Activated CD8-positive, alpha-beta T cell treated with anti-CD3 and anti-CD28 coated beads, Interleukin-2, amount 10 ng/mL, durations not matched to agents 7 days and 5 days (primary cell): ENCODE measurements at regions of chr1 and their contacts with region 1.

Region 1: DNA sequence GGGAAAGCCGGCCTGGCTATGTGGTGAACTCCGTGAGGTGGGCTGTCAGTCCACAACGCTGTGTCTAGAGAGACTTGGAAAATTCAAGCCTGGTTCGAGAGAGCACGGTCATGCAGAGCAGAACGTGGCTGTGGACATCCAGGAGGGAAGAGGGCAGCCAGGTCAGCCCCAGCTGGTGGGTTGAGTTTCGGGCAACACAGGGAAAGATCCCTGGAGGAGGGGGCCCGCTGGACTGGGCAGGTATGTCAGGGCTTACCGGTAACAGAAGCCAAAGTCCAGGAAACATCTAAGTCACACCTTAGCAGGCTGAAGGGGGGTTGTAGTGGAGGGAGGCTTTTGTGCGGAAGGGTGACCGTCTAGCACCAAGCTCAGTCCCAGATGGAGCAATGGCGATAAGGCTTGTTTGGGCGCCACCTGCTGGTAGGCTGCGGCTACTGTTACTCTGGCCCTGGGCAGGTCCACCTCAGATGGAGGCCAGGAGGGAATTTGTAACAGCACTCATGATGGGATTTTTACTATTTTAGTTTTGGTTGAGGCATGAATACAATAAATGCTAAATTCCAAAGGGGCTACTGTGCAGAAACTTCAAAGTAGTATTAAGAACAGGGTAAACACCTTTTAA is 143.3 kb upstream of the ZNF644 start:
- DNase-seq: peak; percentile 73
- ATAC-seq: peak; percentile 89
- H3K4me3 Mint-ChIP-seq: no peak overlapping the region
- H3K27ac Mint-ChIP-seq: no peak overlapping the region
- H3K4me1 Mint-ChIP-seq: no peaks in the 10 kb centered on the region
- H3K27me3 Mint-ChIP-seq: no peaks in the 10 kb centered on the region

Region 2: DNA sequence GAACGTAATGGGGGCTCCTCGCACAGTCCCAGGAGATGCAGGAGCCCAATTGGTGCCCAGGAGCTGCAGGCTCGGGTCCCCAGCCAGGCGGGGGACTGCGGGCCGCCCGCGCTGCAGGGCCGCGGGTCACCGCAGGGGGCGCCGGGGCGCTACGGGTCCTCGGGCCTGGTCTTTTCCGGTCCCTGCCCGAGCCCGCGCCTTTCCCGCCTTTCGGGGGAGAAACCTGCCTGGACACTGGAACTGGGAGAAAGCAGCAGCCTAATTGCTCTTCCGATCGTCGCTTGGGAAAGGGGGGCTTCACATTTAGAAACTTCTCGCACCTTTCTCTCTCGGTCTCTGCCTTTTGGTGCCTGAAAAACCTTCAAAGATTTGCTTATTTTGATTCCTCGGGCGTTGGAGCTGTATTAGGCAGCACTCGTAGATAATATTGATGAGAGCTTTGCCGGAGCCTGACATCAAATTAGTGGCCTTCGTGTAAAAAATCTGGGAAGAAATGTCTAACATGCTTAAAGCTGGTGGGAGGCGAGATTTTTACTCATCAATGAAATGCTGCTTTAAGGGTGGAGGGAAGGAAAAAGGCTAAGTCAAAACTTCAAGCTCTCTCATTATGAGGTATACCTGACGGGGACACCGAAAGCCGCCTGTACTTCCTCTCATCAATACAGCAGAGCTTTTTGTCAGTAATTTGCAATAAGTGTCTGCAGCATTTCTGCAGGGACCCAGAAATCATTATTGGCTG is 435.5 kb before region 1 on chr1:
- CTCF ChIA-PET with region 1: interaction called, 12 read pairs
- POLR2A ChIA-PET with region 1: no interaction called
- DNase-seq: no peak
- ATAC-seq: no peak
- H3K4me3 Mint-ChIP-seq: no peak overlapping the region
- H3K27ac Mint-ChIP-seq: no peak overlapping the region
- H3K4me1 Mint-ChIP-seq: peaks cover 38% of the 10 kb centered on the region
- H3K27me3 Mint-ChIP-seq: peaks cover 79% of the 10 kb centered on the region

Region 3: DNA sequence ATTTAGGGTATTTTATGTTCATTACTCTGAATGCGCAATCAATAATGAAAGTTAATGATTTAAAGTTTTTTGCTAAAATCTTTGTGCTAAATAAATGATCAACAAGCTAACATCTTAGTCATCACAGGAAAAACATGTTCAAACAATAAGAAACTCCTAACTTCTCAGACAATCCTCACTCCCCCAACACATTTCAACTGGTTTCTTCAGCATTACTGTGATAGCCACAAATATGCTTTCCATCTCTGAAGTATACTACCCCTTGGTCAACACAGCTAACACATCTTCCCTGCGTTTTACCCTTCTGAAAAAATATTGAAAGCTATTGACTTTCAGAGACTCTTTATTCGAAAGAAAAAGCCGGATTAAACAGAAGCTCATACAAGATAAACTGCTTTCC is 229.1 kb before region 1 on chr1:
- CTCF ChIA-PET with region 1: no interaction called
- POLR2A ChIA-PET with region 1: no interaction called
- DNase-seq: no peak
- ATAC-seq: no peak
- H3K4me3 Mint-ChIP-seq: no peak overlapping the region
- H3K27ac Mint-ChIP-seq: no peak overlapping the region
- H3K4me1 Mint-ChIP-seq: no peaks in the 10 kb centered on the region
- H3K27me3 Mint-ChIP-seq: no peaks in the 10 kb centered on the region

Region 4: DNA sequence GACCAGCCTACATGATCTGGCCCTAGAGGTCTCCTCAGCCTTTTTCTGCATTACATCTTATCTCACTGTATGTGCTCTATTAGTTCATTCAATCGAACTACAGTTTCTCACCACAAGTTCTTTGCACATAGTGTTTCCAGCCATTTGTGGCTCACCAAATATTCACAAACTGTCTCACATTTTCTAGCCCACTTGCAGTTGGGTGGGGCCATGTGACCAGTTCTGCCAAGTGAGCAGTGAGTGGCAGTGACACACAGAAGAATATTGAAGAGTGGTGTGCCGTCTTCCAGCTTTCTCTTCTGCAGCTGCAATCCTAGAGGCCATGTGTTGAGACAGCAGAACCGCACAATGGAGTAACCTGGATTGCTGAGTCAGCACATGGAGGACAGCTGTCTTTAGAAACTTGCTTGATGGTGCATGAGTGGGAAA is 40.1 kb before region 1 on chr1:
- CTCF ChIA-PET with region 1: interaction called, 14 read pairs
- POLR2A ChIA-PET with region 1: no interaction called
- DNase-seq: no peak
- ATAC-seq: no peak
- H3K4me3 Mint-ChIP-seq: no peak overlapping the region
- H3K27ac Mint-ChIP-seq: no peak overlapping the region
- H3K4me1 Mint-ChIP-seq: peaks cover 3% of the 10 kb centered on the region
- H3K27me3 Mint-ChIP-seq: peaks cover 3% of the 10 kb centered on the region

Region 5: GRCh38 chr1:91282695-91283420 is 117.7 kb after region 1 on chr1:
- CTCF ChIA-PET with region 1: interaction called, 30 read pairs
- POLR2A ChIA-PET with region 1: no interaction called
- DNase-seq: peak; percentile 62
- ATAC-seq: no peak
- H3K4me3 Mint-ChIP-seq: no peak overlapping the region
- H3K27ac Mint-ChIP-seq: no peak overlapping the region
- H3K4me1 Mint-ChIP-seq: no peaks in the 10 kb centered on the region
- H3K27me3 Mint-ChIP-seq: peaks cover 4% of the 10 kb centered on the region